Dendritic cell treated with granulocyte-macrophage colony-stimulating factor and Interleukin-4, amounts not matched to agents 40 ng/mL and 50 ng/mL, for 4 days (primary cell): ENCODE measurements at regions of chr7 and their contacts with region 1.

Region 1: GRCh38 chr7:44606450-44607254 is at the start of gene OGDH:
- H3K4me3 Mint-ChIP-seq: peak within 1 kb of the TSS; percentile 94
- H3K27ac Mint-ChIP-seq: peak within 1 kb of the TSS; percentile 98
- H3K4me1 Mint-ChIP-seq: peaks cover 53% of the 10 kb centered on the region
- H3K27me3 Mint-ChIP-seq: peaks cover 11% of the 10 kb centered on the region

Region 2: DNA sequence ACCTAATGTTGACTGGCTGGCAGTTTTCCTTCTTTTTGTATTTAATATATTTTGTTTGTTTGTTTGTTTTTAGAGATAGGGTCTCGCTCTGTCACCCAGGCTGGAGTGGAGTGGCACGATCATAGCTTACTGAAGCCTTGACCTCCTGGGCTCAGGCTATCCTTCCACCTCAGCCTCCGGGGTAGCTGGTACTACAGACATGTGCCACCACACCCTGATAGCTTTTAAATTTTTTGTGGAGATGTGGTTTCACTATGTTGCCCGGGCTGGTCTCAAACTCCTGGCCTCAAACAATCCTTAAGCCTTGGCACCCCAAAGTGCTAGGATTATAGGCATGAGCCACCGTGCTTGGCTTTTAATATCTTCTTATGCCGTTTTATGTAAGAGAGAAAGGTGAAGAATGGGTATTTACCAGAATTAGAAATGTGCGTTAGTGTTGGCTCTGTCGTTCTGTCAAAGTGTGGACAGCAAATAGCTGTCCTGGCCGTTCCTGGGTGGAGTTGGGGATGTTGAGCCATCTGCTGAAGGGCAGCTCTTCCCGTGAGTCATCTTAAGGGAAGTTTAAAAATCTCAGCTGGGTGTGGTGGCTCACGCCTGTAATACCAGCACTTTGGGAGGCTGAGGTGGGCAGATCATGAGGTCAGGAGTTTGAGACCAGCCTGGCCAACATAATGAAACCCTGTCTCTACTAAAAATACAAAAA is 14.5 kb after region 1 on chr7:
- intact Hi-C with region 1: loop called (anchors 2 kb)
- H3K4me3 Mint-ChIP-seq: peak overlapping the region; percentile 53
- H3K27ac Mint-ChIP-seq: peak overlapping the region; percentile 91
- H3K4me1 Mint-ChIP-seq: peaks cover 72% of the 10 kb centered on the region
- H3K27me3 Mint-ChIP-seq: no peaks in the 10 kb centered on the region

Region 3: DNA sequence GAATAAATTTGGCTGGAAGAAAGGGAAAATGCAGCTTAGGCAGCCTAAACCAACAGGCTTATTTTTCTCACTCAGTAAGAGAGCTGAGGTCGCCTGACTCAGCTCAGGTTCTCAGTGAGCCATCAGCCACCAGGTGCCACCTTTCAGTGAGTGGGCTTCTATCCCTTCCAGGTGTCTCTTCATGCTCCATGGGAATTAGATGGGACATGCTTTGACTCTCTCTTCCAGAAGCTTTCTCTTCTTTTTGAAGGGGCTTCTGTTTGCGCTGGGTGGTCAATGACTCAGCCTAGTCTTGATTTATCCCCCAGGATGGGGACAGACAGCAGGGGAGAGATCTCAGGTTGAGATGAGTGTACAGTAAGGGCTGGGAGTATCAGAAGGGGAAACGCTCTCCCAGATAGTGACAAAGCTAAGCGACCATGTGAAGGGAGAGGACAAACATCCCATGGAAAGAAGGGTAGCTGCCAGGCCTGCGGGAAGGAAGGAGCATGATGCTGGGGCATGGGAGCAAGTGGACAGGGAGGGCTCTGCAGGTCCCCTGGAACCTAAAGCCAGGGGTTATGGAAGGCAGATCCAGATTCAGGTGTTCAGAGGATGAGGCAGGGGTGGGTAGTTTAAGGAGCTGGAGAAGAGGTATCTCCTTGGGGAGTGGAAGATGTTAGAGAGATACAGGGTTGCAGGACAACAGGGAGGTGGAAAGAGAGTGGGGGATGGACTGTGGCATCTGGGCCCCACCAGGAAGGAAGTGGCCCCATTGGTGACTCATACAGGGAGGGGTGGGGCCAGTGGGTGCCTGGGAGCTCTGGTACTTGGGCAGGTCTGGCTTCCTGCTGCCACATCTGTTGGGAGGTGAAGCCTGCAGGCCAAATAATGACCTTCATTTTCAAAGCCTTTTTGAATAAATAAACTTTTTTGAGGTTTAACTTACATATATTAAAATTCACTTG is 32.2 kb after region 1 on chr7:
- intact Hi-C with region 1: loop called (anchors 1 kb)
- H3K4me3 Mint-ChIP-seq: peak overlapping the region; percentile 56
- H3K27ac Mint-ChIP-seq: peak overlapping the region; percentile 97
- H3K4me1 Mint-ChIP-seq: peaks cover 68% of the 10 kb centered on the region
- H3K27me3 Mint-ChIP-seq: no peaks in the 10 kb centered on the region

Region 4: GRCh38 chr7:44735403-44736165 is 128.9 kb after region 1 on chr7:
- intact Hi-C with region 1: no loop called
- H3K4me3 Mint-ChIP-seq: no peak overlapping the region
- H3K27ac Mint-ChIP-seq: peak overlapping the region; percentile 79
- H3K4me1 Mint-ChIP-seq: peaks cover 27% of the 10 kb centered on the region
- H3K27me3 Mint-ChIP-seq: peaks cover 2% of the 10 kb centered on the region

Region 5: DNA sequence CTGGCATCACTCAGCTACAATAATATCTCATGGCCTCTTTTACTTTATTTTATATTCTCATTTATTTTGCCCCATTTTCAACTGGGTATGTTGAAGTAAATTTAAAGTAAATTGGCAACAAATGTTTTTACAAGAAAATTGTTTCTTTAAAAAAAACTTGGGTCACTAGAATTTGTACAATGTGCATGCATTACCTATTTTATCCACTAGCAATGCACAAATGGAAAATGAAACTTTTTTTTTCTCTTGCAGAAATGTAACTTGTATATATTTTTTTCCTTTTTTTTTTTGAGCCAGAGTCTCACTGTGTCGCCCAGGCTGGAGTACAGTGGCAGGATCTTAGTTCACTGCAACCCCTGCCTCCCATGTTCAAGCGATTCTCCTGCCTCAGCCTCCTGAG is 251.5 kb after region 1 on chr7:
- intact Hi-C with region 1: no loop called
- H3K4me3 Mint-ChIP-seq: no peak overlapping the region
- H3K27ac Mint-ChIP-seq: no peak overlapping the region
- H3K4me1 Mint-ChIP-seq: peaks cover 6% of the 10 kb centered on the region
- H3K27me3 Mint-ChIP-seq: no peaks in the 10 kb centered on the region